Dendritic cell treated with granulocyte-macrophage colony-stimulating factor and Interleukin-4, amounts not matched to agents 40 ng/mL and 50 ng/mL, for 4 days (primary cell): ENCODE measurements at regions of chr3 and their contacts with region 1.

Region 1: GRCh38 chr3:101779047-101779821 is at the start of gene NXPE3:
- H3K4me3 Mint-ChIP-seq: peak within 1 kb of the TSS; percentile 86
- H3K27ac Mint-ChIP-seq: peak within 1 kb of the TSS; percentile 93
- H3K4me1 Mint-ChIP-seq: peaks cover 43% of the 10 kb centered on the region
- H3K27me3 Mint-ChIP-seq: no peaks in the 10 kb centered on the region

Region 2: GRCh38 chr3:101676765-101677435 is 102.3 kb before region 1 on chr3 and contains the start of gene ZBTB11:
- intact Hi-C with region 1: loop called (anchors 2 kb)
- H3K4me3 Mint-ChIP-seq: peak within 1 kb of the TSS; percentile 89
- H3K27ac Mint-ChIP-seq: peak within 1 kb of the TSS; percentile 98
- H3K4me1 Mint-ChIP-seq: peaks cover 46% of the 10 kb centered on the region
- H3K27me3 Mint-ChIP-seq: no peaks in the 10 kb centered on the region